ENCODE measurements at regions of chr1 and their contacts with region 1.

Region 1: GRCh38 chr1:165592945-165593823 is 37.9 kb upstream of the MGST3 start:
- DNase-seq: no peak
- ATAC-seq: peak; percentile 87
- H3K4me3 ChIP-seq: no peak overlapping the region
- H3K27ac ChIP-seq: no peak overlapping the region
- H3K4me1 ChIP-seq: peaks cover 7% of the 10 kb centered on the region
- H3K27me3 ChIP-seq: peaks cover 5% of the 10 kb centered on the region
- CTCF ChIP-seq: peak; percentile 97

Region 2: GRCh38 chr1:165376041-165376810 is 217.0 kb before region 1 on chr1:
- intact Hi-C with region 1: no loop called
- DNase-seq: peak; percentile 81
- ATAC-seq: peak; percentile 85
- H3K4me3 ChIP-seq: peak overlapping the region; percentile 50
- H3K27ac ChIP-seq: peak overlapping the region; percentile 77
- H3K4me1 ChIP-seq: peaks cover 20% of the 10 kb centered on the region
- H3K27me3 ChIP-seq: peaks cover 15% of the 10 kb centered on the region
- CTCF ChIP-seq: no peak

Region 3: DNA sequence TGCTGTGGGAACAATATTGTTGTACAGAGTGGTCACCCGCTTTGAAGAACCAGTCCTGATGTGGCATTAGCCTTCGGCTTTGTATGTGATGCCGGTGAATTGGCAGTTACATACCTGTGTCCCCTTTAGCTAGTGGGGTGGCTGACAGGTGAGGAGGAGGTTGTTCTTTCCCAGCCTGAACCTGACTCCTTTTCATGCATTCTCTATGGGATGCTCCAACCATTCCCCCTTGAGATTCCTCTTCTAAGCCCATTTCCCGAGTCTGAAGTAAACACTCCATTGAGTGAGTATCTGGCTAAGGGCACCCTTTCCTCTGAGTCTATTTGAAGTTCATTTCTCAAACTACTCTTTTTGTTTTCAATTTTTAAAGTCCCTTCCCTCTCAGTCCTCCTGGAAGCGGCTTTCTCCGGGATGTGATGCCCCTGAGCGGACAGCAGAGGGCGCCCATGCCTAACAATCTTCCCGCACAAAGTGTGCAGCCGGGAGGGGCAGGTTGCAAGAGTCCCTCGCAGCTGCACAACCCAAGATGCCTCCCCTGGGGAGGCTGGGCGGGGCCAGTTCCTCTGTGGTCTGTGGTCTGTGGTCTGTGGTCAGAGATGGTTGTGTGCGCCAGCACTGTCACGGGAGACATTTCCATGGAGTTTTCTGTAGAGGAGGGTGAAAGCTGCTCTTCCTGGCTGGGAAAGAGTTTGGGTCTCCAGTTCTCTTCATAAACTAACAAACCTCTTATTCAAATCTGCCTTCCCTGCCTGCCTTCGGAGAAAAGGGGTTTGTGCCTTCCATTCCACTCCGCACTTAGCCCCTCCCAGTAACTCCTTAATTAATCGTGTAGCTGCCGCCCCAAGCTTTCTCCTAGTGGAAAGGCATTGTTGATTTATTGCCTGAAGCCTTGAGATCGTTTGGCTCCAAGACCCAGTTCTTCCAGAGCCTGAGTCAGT is 200.3 kb before region 1 on chr1:
- intact Hi-C with region 1: loop called (anchors 5 kb)
- DNase-seq: peak; percentile 92
- ATAC-seq: peak; percentile 99
- H3K4me3 ChIP-seq: peak overlapping the region; percentile 23
- H3K27ac ChIP-seq: no peak overlapping the region
- H3K4me1 ChIP-seq: peaks cover 7% of the 10 kb centered on the region
- H3K27me3 ChIP-seq: peaks cover 10% of the 10 kb centered on the region
- CTCF ChIP-seq: peak; percentile 98

Measured in upper lobe of right lung (tissue), 1 donor.